Activated T-helper 1 cell treated with anti-CD3 and anti-CD28 coated beads, Interleukin-12 subunit alpha, Interleukin-12 subunit beta, Interleukin-2, Interleukin-4 antibody, amounts not matched to agents 30 ng/mL and 10 ng/mL and 1 ng/mL, durations not matched to agents 14 hours and 24 hours and 36 hours (primary cell): ENCODE measurements at regions of chr9 and their contacts with region 1.

Region 1: DNA sequence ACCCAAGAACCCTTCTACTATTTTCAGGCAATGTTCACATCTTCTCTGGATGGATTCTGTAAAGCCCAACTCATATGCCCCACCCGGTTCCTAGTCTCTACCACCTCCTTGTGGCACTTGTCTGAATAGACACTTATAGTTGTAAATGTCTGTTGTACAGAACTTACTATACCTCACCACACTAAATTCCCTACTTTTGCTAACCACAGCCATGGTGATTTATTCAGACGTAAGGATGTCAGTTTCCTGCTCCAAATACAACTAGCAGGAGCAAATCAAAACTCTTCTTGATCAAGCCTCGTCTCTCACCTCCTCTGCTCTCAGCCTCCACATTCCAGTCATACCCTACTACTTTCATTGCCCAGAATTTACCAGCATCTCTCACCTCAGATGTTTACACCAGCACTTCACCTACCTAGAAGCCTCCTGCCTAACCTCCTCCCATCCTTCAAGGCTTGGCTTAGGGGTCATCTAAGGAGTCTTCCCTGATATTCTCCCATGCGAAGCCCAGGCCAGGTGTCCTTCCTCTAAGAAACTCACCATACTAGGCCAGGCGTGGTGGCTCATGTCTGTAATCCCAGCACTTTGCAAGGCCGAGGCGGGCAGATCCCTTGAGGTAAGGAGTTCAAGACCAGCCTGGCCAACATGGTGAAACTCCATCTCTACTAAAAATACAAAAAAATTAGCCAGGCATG is 75.5 kb downstream of the MAPKAP1 start:
- DNase-seq: peak; percentile 14
- H3K4me3 Mint-ChIP-seq: peak overlapping the region; percentile 55
- H3K27ac Mint-ChIP-seq: peak overlapping the region; percentile 76
- H3K4me1 Mint-ChIP-seq: peaks cover 58% of the 10 kb centered on the region
- H3K27me3 Mint-ChIP-seq: no peaks in the 10 kb centered on the region

Region 2: DNA sequence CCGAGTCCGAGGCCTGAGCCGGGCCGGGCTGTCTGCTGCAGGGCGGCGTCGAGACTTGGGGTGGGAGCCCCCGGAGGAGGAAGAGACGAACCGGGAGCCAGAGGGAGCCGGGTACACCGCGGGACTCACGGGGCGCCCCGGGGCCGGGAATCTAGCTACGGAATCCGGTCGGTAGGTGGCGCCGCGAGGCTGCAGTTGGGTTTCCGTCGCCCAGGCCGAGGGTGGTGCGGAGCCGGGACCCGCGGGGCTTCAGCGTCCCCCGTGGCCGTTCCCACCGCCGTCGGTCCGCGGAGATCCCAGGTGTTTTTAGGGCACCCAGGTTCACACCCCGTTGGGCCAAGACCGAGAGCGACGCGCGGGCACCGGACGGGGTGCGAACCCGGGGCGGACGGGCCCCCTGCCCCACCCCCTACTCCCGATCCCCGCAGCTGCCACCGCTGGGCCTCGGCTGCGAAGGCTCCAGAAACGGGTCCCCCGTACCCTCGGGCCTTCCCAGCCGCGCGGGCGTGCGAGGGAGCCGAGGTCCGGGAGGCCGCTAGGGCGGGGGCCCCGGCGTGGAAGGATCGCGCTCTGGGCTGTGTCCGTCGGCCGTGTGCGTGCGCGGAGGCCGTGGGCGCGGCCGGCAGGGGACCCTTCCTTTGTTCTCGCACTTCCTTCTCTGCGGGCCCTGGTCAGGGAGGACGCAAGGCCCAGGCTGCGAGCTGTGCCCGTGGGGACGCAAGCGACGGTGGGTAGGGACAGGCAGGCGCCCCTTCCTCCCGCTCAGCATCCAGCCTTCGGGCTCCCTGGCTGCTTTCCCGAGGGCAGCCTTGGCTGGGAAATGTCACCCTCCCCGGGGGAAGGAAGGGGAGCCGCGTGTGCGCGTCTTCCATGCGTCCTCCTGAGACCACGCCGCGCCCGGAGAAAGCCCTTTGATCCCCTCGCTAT is 223.3 kb before region 1 on chr9:
- intact Hi-C with region 1: loop called (anchors 1 kb)
- DNase-seq: peak; percentile 53
- H3K4me3 Mint-ChIP-seq: peak overlapping the region; percentile 79
- H3K27ac Mint-ChIP-seq: no peak overlapping the region
- H3K4me1 Mint-ChIP-seq: peaks cover 7% of the 10 kb centered on the region
- H3K27me3 Mint-ChIP-seq: peaks cover 15% of the 10 kb centered on the region

Region 3: DNA sequence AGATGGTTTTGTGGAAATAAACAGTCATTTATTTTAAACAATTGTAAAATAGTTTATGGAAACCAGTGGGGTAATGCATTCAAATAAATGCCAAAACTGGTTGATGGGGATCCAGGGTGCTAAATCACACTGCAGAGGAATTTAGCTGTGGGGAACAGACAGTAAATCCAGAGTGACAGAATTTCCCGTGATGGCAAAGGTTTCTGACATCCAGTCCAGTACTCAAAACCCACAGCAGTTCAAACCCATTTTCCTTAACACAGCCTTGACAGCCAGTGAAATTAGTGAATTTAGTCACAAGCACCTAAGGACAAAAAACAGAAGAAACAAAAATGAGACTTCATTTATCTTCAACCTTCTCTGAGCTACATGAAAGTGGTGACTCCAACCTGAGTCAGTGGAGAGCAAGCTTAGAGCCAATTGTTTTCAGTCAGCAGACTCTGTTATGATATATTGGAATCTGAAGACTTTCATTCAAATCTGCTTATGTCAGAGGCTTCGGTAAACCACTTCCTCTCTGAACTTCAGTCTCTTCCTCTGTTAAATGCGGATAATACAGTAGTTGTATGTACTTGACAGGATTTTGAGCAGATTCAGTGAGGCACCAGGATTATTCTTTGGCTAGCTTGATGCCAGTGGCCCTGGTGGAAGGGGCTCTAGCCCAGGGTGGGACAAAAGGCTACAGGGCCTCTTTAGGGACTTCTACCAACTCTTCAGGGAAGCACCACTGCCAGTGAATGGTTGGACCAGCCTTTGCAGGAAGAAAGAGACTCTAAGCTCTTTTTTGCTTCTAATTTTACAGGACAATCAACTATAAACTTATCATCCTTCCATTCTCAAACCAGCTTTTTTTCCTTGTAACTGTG is 109.8 kb before region 1 on chr9:
- intact Hi-C with region 1: loop called (anchors 1 kb)
- DNase-seq: peak; percentile 38
- H3K4me3 Mint-ChIP-seq: peak overlapping the region; percentile 61
- H3K27ac Mint-ChIP-seq: peak overlapping the region; percentile 91
- H3K4me1 Mint-ChIP-seq: peaks cover 33% of the 10 kb centered on the region
- H3K27me3 Mint-ChIP-seq: no peaks in the 10 kb centered on the region

Region 4: GRCh38 chr9:125650271-125650737 is 18.8 kb after region 1 on chr9:
- intact Hi-C with region 1: loop called (anchors 1 kb)
- DNase-seq: no peak
- H3K4me3 Mint-ChIP-seq: peak overlapping the region; percentile 54
- H3K27ac Mint-ChIP-seq: peak overlapping the region; percentile 85
- H3K4me1 Mint-ChIP-seq: peaks cover 71% of the 10 kb centered on the region
- H3K27me3 Mint-ChIP-seq: no peaks in the 10 kb centered on the region

Region 5: DNA sequence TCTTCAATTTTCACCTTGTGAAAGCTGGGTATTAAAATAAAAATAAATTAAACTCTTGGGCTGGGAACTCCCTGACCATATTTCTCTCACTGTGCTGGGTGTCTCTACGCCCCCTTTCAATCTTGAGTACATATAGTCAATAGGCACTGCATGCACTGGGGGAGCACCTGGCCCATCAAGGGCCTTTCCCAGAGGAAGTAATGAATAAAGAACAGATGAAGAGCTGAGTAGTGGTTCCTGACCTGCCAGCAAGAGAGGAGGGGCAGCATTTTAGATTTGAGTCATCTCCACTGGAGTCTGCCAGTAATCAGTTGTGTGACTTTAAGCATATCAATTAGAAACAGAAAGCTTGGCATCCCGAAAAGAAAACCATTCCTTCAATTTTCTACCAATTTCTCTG is 69.3 kb after region 1 on chr9:
- intact Hi-C with region 1: loop called (anchors 1 kb)
- DNase-seq: no peak
- H3K4me3 Mint-ChIP-seq: no peak overlapping the region
- H3K27ac Mint-ChIP-seq: peak overlapping the region; percentile 53
- H3K4me1 Mint-ChIP-seq: peaks cover 56% of the 10 kb centered on the region
- H3K27me3 Mint-ChIP-seq: no peaks in the 10 kb centered on the region

Region 6: DNA sequence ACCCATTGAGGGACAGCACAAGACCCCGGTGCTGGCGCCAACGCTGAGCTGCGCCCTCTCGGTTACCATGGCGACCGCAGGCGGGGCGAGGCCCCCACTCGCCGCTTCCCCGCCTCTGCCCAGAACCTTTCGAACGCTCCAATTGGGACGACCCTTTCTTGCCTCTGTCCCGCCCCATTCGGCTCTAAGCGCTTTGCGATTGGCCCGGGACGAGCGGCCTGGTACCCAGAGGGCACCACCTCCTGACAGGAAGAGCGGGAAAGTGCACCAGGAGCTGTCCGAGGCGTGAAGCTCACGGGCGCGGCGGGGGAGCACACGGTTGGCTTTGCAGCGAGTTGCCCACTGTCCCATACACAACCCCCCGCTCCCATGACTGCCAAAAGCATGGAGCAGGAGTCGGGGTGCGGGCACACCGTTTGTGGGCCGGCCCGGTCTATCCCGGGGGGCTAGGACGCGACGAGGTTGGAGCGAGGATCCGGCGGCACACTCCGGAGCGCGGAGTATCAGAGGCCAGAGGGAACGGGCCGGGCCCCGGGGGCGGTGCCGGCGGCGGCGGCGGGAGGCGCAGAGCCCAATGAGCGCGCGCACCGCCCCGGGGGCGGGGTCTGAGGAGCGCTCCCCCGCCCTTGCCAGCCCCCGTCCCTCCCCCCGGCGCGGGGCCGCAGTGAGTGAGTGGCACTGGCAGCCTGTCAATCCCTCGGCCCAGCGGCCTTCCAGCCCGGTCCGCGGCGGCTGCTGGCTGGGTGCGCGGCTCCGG is 114.7 kb after region 1 on chr9:
- intact Hi-C with region 1: loop called (anchors 1 kb)
- DNase-seq: peak; percentile 88
- H3K4me3 Mint-ChIP-seq: peak overlapping the region; percentile 88
- H3K27ac Mint-ChIP-seq: peak overlapping the region; percentile 91
- H3K4me1 Mint-ChIP-seq: peaks cover 39% of the 10 kb centered on the region
- H3K27me3 Mint-ChIP-seq: peaks cover 25% of the 10 kb centered on the region

Region 7: GRCh38 chr9:126398403-126399058 is 767.0 kb after region 1 on chr9:
- intact Hi-C with region 1: loop called (anchors 10 kb)
- DNase-seq: peak; percentile 67
- H3K4me3 Mint-ChIP-seq: peak overlapping the region; percentile 19
- H3K27ac Mint-ChIP-seq: no peak overlapping the region
- H3K4me1 Mint-ChIP-seq: peaks cover 64% of the 10 kb centered on the region
- H3K27me3 Mint-ChIP-seq: peaks cover 15% of the 10 kb centered on the region